Activated B cell treated with CpG ODN at 0.5 μM for 24 hours (primary cell): ENCODE measurements at regions of chr17 and their contacts with region 1.

Region 1: DNA sequence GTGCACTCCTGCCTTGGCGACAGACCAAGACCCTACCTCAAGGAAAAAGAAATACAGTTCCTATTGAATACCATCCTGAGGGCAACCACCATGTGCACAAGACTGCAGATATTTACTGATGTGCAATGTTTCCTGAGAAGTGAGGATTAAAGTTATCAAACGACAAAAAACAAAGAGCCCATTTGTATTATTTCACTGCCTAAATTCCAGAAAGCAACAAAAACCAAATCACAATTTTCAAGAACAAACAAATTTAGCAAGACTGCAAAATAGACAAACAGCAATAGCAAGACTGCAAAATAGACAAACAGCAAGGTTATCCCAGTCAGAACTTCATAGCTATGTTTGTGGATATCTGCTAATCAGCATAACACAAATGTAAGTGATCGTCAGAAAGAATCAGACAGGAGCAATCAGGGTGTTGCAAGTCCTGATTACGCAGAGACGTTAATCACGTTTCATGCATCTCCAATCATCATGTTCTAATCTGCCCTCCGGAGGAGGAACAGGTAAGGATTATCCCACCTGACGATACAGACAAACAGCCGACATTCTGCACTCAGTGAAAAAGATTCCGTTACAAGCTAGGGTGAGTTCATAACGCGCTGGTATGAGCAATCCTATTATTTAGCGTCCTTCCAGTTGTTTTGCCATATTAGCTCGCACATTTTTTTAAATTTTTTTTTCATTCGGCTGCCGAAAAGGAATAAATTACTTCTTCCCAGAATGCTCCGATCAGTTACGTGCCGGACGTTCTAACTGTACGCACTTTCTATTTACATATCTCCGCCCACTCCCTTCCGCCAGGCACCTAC is 2.9 kb downstream of the TMEM107 start:
- DNase-seq: peak; percentile 40
- ATAC-seq: peak; percentile 76
- H3K4me3 Mint-ChIP-seq: peak overlapping the region; percentile 84
- H3K27ac Mint-ChIP-seq: peak overlapping the region; percentile 100
- H3K4me1 Mint-ChIP-seq: peaks cover 44% of the 10 kb centered on the region
- H3K27me3 Mint-ChIP-seq: no peaks in the 10 kb centered on the region
- CTCF ChIP-seq: no peak

Region 2: GRCh38 chr17:7856883-7857723 is 316.2 kb before region 1 on chr17 and contains the start of gene NAA38:
- CTCF ChIA-PET with region 1: no interaction called
- POLR2A ChIA-PET with region 1: interaction called, 12 read pairs
- intact Hi-C with region 1: no loop called
- DNase-seq: peak; percentile 88
- ATAC-seq: peak; percentile 83
- H3K4me3 Mint-ChIP-seq: no peak within 1 kb of the TSS
- H3K27ac Mint-ChIP-seq: no peak within 1 kb of the TSS
- H3K4me1 Mint-ChIP-seq: peaks cover 5% of the 10 kb centered on the region
- H3K27me3 Mint-ChIP-seq: no peaks in the 10 kb centered on the region
- CTCF ChIP-seq: no peak
- total RNA-seq, gene NAA38: 36.0 and 47.9 TPM in 2 replicates

Region 3: GRCh38 chr17:7922845-7923628 is 250.2 kb before region 1 on chr17:
- CTCF ChIA-PET with region 1: no interaction called
- POLR2A ChIA-PET with region 1: no interaction called
- intact Hi-C with region 1: no loop called
- DNase-seq: peak; percentile 71
- ATAC-seq: peak; percentile 98
- H3K4me3 Mint-ChIP-seq: peak overlapping the region; percentile 82
- H3K27ac Mint-ChIP-seq: peak overlapping the region; percentile 80
- H3K4me1 Mint-ChIP-seq: peaks cover 19% of the 10 kb centered on the region
- H3K27me3 Mint-ChIP-seq: no peaks in the 10 kb centered on the region
- CTCF ChIP-seq: no peak

Region 4: DNA sequence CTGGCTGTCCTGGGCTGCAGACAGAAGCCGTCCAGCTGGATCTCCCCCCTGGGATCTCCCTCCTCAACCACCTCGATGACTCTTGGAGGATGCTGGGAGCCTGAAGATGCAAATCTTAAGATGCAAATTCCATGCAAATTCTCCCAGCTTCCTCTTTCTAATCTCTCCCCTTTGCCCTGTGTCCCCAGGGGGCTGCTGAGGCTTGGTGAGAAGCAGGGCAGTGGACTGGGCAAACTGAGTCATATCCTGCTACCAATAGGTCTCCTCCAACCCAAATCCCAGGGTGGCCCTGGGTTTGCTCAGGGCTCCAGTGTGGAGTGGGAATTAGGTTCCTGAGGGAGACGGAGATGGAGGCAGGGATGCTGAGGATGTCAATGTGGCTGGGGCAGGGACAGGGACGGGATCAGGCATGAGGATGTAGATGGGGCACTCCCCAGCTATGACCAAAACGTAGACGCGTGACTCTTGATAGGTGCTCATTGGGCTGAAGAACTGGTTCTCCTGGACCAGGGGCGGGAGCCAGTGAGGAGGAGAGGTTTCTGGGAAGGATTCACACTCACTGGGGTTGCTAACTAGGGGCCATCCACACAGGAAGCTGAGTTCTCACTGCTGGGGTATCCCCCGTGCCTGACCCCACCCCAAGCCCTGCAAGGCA is 82.1 kb before region 1 on chr17:
- CTCF ChIA-PET with region 1: interaction called, 4 read pairs
- POLR2A ChIA-PET with region 1: interaction called, 25 read pairs
- intact Hi-C with region 1: no loop called
- DNase-seq: peak; percentile 71
- ATAC-seq: peak; percentile 90
- H3K4me3 Mint-ChIP-seq: peak overlapping the region; percentile 80
- H3K27ac Mint-ChIP-seq: peak overlapping the region; percentile 95
- H3K4me1 Mint-ChIP-seq: peaks cover 46% of the 10 kb centered on the region
- H3K27me3 Mint-ChIP-seq: peaks cover 7% of the 10 kb centered on the region
- CTCF ChIP-seq: no peak

Region 5: DNA sequence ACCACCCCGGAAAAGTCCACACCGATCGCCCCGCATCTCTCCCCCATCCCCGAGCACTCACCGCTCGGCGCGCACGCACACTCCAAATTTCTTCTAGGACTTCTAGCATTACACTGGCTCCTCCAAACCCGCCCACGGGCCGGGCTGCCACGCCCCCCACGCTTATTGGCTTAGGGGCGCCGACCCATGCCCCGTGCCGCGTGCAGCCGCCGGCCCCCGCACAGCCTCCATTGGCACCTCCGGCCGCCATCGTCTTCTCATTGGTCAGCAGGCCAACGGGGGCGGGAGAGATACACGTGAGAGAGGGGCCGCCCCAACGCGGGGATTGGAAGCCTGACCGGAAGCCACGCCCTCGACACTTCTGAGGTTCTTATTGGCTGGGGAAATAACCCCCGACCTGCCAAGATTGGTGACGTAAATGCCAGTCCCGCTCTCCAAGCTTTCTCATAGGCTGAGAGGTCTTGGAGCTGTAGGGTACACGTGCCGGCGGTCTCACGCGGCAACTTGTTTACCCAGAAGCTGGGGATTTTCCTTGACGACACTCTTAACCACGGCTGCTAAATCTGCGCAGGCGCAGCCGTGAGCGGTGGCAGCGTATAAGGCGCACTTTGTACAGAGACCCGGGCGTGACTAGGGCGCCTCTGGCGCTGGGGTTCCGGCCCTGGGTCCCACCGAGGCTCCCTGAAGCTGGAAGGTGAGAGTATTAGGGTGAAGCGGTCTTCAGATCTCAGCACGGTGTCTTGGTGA is 16.8 kb before region 1 on chr17:
- CTCF ChIA-PET with region 1: interaction called, 5 read pairs
- POLR2A ChIA-PET with region 1: interaction called, 385 read pairs
- intact Hi-C with region 1: loop called (anchors 1 kb)
- DNase-seq: peak; percentile 98
- ATAC-seq: peak; percentile 82
- H3K4me3 Mint-ChIP-seq: no peak overlapping the region
- H3K27ac Mint-ChIP-seq: no peak overlapping the region
- H3K4me1 Mint-ChIP-seq: peaks cover 48% of the 10 kb centered on the region
- H3K27me3 Mint-ChIP-seq: no peaks in the 10 kb centered on the region
- CTCF ChIP-seq: no peak

Region 6: DNA sequence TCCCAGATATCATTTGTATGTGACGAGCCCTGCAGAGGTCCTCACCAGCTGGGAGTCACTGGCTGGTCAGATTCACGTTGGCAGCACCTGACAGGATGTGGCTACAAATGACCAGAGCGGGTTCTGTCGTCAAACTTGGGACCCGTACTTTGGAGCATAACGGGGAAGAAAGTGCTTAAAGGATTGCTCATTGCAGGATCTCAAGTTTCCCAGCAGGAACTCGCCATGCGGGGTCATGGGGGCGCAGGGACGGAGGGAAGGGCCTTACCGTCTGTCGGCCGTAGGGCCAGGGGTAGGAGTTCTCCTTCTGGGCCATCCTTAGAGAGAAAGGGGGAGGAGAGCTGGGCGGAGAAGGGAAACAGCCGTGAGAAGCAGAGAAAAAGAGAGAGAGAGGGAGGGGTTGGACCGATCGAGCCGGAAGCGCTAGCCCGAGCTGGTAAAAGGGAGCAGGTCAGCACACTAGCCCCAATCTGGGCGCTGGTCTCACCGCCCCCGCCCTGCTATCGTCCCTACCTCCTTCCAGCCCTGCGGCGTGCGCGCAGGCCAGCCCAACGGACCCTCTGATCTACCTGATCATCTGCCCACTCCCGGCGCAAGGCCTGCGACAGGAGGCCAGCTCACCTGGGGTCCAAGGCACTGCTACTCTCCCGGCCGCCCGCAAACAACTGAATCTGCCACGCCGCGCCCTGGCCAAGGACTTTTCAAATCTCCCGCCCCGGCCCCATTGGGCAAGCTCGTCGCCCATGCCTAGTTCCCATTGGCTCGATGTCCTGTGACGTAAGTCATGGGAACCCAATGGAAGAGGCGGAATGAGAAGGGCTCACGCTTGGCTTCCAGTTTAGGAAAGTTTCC is 36.9 kb after region 1 on chr17 and contains the start of gene AURKB:
- CTCF ChIA-PET with region 1: no interaction called
- POLR2A ChIA-PET with region 1: interaction called, 43 read pairs
- intact Hi-C with region 1: loop called (anchors 1 kb)
- DNase-seq: peak; percentile 80
- ATAC-seq: peak; percentile 99
- H3K4me3 Mint-ChIP-seq: peak within 1 kb of the TSS; percentile 95
- H3K27ac Mint-ChIP-seq: peak within 1 kb of the TSS; percentile 91
- H3K4me1 Mint-ChIP-seq: peaks cover 19% of the 10 kb centered on the region
- H3K27me3 Mint-ChIP-seq: no peaks in the 10 kb centered on the region
- CTCF ChIP-seq: no peak
- total RNA-seq, gene AURKB: 1.7 and 3.0 TPM in 2 replicates

Region 7: DNA sequence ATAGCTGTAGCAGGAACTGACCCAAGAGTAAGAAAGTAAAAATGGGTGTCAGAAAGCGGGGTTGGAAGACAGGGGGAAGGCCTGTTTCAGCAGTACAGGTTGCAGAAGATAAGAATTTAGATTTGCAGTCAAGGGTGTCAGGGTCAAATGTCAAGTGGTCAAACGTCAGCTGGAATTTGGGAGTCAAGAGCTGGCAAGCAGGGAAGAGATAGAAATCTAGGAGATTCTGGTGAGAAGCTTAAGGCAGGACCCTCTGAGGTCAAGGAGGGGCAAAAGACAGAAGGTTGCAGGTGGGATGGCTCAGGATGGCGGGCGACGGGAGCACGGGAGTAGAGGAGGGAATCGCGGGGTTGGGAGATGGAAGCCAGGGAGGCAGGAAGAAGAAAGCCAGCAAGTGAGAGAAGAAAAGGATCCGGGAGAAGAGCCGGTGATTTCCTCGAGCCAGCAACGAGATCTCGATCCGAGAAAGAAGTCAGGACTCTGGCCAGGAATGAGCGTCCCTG is 121.6 kb after region 1 on chr17:
- CTCF ChIA-PET with region 1: no interaction called
- POLR2A ChIA-PET with region 1: interaction called, 43 read pairs
- intact Hi-C with region 1: loop called (anchors 1 kb)
- DNase-seq: no peak
- ATAC-seq: no peak
- H3K4me3 Mint-ChIP-seq: peak overlapping the region; percentile 92
- H3K27ac Mint-ChIP-seq: peak overlapping the region; percentile 86
- H3K4me1 Mint-ChIP-seq: peaks cover 30% of the 10 kb centered on the region
- H3K27me3 Mint-ChIP-seq: no peaks in the 10 kb centered on the region
- CTCF ChIP-seq: no peak

Region 8: GRCh38 chr17:8409966-8410864 is 237.0 kb after region 1 on chr17:
- CTCF ChIA-PET with region 1: no interaction called
- POLR2A ChIA-PET with region 1: no interaction called
- intact Hi-C with region 1: no loop called
- DNase-seq: peak; percentile 66
- ATAC-seq: peak; percentile 81
- H3K4me3 Mint-ChIP-seq: no peak overlapping the region
- H3K27ac Mint-ChIP-seq: no peak overlapping the region
- H3K4me1 Mint-ChIP-seq: peaks cover 4% of the 10 kb centered on the region
- H3K27me3 Mint-ChIP-seq: peaks cover 13% of the 10 kb centered on the region
- CTCF ChIP-seq: peak; percentile 87

Region 9: GRCh38 chr17:9054126-9054975 is 881.1 kb after region 1 on chr17:
- CTCF ChIA-PET with region 1: no interaction called
- POLR2A ChIA-PET with region 1: no interaction called
- intact Hi-C with region 1: no loop called
- DNase-seq: no peak
- ATAC-seq: no peak
- H3K4me3 Mint-ChIP-seq: no peak overlapping the region
- H3K27ac Mint-ChIP-seq: no peak overlapping the region
- H3K4me1 Mint-ChIP-seq: no peaks in the 10 kb centered on the region
- H3K27me3 Mint-ChIP-seq: peaks cover 1% of the 10 kb centered on the region
- CTCF ChIP-seq: no peak